Ascending aorta (tissue), 2 donors: ENCODE measurements at regions of chr5 and their contacts with region 1.

Region 1: DNA sequence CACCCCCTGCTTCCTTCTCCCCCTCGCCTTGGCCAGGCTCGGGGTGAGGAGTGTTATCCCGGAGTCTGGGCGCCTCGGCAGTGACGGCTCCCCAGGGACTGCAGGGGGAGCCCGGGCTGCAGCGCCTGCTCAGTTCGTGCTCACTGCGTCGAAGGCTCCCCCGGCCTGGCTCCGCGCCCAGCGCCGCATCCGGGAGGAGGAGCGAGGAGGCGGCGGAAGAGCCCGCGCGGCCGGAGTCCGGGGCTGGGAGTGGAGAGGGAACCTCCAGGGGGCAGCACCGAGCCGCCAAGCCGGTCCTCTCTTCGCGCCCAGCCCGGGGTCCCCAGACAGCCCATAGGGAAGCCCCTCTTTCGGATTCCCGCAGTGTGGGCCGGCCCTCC is 1.3 kb upstream of the EGR1 start:
- DNase-seq: peak; percentile 71 to 96
- H3K4me3 ChIP-seq: peak overlapping the region; percentile 65 to 91
- H3K27ac ChIP-seq: peak overlapping the region; percentile 98 to 99
- H3K4me1 ChIP-seq: peaks cover 9 to 27% of the 10 kb centered on the region in 2 donors
- H3K27me3 ChIP-seq: no peaks in the 10 kb centered on the region
- CTCF ChIP-seq: peak; percentile 90 to 96 (median 95)

Region 2: DNA sequence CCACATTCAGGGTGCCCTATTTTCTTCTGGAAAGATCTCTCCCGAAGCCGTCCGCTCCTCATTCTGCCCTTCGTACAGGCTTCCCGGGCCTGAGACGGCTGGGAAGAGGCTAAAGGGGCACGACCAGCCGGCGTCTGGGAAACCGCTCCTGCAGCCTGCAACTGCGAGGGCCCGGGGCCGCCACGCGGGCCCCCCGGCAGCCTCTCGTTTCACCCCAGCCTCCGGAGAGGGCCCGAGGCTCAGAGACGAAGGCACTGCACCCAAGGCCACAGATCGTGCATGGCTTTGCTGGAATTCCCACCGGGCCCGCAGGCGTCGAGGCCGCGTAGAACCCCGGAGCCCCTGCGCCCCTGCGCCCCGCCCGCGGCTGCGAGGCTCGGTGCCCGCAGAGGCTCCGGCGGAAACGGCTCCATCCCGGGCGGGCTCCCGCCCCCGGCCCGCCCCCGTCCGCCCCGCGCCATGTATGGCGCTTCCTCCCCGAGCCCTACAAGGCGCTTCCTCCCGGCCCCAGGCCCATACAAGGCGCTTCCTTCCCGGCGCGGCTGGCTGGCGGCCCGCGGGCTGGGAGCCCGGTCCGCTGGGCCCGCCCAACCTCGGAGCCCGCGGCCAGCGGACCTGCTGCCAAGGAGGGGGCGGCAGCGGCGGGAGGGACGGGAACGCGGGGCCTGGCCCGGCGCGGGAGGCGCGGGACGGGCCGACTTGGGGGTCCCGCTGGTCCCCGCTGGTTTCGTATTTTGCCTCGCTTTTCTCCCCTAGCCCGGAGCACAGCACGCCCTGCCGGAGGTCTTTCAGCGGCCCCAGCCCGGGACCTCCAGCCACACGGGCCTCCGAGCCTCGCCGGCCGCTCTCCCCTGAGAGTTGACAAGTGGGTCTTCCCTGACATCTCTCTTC is 27.9 kb after region 1 on chr5:
- intact Hi-C with region 1: loop called (anchors 1 kb)
- DNase-seq: peak; percentile 71 to 96
- H3K4me3 ChIP-seq: peak overlapping the region; percentile 57 to 68
- H3K27ac ChIP-seq: peak overlapping the region; percentile 42 to 78
- H3K4me1 ChIP-seq: peaks cover 9 to 31% of the 10 kb centered on the region in 2 donors
- H3K27me3 ChIP-seq: no peaks in the 10 kb centered on the region
- CTCF ChIP-seq: no peak